ENCODE measurements at regions of chr11 and their contacts with region 1.

Region 1: DNA sequence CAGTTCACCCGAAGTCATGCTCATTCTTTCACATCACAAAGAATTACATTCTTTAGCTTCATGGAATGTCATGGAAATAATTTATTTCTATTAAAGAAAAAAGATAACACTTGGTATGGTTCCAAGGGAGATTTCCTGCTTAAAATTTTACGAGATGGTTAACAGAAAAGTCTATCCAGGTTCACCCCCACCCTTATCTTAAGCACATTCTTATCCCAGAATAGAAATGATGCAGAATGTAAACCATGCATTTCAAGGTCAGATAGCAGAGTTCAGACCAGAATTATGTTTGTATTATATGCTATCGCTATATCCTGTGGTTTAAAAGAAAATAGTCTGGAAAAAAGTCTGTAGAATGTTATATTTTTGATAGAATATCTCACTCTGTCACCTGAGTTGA is 58.7 kb downstream of the GAS2 start:
- DNase-seq: no peak
- H3K4me3 ChIP-seq: no peak overlapping the region
- H3K27ac ChIP-seq: no peak overlapping the region
- H3K4me1 ChIP-seq: no peaks in the 10 kb centered on the region
- H3K27me3 ChIP-seq: no peaks in the 10 kb centered on the region
- CTCF ChIP-seq: no peak

Region 2: DNA sequence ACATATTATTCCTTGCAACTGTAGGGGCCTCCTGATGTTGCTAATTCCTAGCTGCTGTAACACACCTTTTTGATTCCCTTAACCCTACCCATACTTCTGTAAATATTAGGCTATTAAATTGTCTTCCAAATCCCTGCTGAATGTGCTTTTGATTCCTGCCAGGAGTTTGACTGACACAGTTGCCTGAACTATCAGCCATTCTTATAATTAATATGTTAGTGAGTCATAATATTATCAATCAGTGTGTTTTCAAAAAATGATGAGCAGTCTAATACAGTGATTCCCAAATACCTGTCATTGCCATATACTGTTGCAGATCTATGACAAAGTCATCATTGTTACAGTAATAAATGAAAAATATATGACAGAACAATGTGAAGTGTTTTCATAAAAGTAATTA is 83.5 kb before region 1 on chr11:
- CTCF ChIA-PET with region 1: no interaction called
- POLR2A ChIA-PET with region 1: interaction called, 30 read pairs
- intact Hi-C with region 1: no loop called
- DNase-seq: no peak
- H3K4me3 ChIP-seq: no peak overlapping the region
- H3K27ac ChIP-seq: no peak overlapping the region
- H3K4me1 ChIP-seq: no peaks in the 10 kb centered on the region
- H3K27me3 ChIP-seq: no peaks in the 10 kb centered on the region
- CTCF ChIP-seq: no peak

Measured in PC-9 (cell line).